Heart left ventricle (tissue), 16 donors: ENCODE measurements at regions of chr12 and their contacts with region 1.

Region 1: DNA sequence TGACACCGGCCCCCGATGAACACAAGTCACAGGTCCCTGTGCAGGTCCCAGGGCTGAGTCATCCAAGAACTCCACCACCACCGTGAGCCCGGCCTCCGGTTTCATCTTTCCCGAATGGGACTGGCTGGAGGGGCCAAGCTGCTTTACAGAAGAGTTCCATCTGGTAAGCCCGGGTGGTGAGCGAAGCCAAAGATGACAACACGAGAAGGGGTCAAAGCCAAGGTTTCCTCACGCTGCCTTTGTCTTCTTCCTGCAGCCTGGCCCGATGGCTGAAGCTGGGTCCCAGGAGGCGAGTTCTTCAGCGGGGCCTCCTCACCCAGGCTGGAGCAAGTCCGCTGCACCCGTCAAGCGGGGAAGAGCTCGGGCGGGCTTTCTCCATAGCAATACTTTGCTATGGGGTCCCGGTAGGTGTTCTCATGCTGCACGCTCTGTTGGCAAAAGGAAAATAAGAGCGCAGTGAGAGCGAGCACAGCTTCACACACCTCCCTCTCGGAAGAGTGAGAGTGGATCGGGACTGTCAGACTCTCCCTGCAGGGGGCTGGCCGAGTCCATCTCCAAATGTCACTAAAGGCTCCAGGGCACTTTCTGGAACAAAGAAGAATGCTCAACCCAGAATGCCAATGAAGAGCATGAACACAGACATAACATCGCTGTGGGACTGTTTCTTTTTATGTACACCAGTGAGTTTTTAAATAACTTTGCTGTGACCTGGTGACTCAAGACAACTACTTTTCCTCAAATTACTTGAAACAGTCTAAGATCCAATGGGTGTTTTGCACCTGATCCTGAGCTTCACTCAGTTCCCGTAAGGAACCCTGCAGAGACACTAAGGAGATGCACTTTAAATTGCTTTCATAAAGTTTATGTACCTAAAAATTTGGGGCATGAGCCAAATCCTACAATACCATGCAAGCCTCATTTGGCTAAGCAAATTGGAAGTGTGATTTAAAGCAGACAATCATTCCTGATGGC is 20.1 kb downstream of the SPRING1 start:
- DNase-seq: peak; percentile 61 to 85 (median 72)
- ATAC-seq: peak; percentile 44 to 83 (median 76)
- H3K4me3 ChIP-seq: peak overlapping the region in 4 of 12 donors; percentile 3 to 45 (median 27)
- H3K27ac ChIP-seq: peak overlapping the region in 3 of 12 donors; percentile 8 to 44 (median 21)
- H3K4me1 ChIP-seq: peaks cover 0 to 35% (median 18%) of the 10 kb centered on the region in 12 donors
- H3K27me3 ChIP-seq: no peaks in the 10 kb centered on the region
- CTCF ChIP-seq: no peak
- POLR2A ChIP-seq: no peak

Region 2: DNA sequence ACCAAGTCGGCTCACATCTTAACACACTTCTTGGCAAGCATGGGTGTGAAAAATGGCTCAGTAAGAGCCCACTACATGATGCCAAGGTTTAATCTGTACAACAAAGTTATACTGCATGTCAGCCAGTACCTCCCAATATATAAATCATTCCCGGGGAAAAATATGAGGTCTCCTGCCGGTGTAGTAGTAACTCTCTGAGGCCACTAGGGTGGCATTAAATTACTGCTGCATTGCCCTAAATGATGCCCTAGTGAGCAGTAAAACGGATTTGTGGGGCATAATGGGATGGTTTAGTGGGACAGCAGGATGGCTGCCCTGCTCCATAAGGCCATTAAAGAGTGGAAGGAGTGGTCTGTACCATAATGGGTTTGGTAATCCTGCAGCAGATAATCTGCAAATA is 707.9 kb before region 1 on chr12:
- intact Hi-C with region 1: loop called in 1 of 10 experiments (anchors 10 kb)
- DNase-seq: no peak
- ATAC-seq: no peak
- H3K4me3 ChIP-seq: no peak overlapping the region
- H3K27ac ChIP-seq: no peak overlapping the region
- H3K4me1 ChIP-seq: no peaks in the 10 kb centered on the region
- H3K27me3 ChIP-seq: no peaks in the 10 kb centered on the region
- CTCF ChIP-seq: peak in 6 of 12 donors; percentile 10 to 41 (median 18)
- POLR2A ChIP-seq: no peak

Region 3: GRCh38 chr12:117119592-117120198 is 401.9 kb after region 1 on chr12:
- intact Hi-C with region 1: loop called in 1 of 10 experiments (anchors 10 kb)
- DNase-seq: no peak
- ATAC-seq: peak; percentile 29 to 40 (median 38)
- H3K4me3 ChIP-seq: no peak overlapping the region
- H3K27ac ChIP-seq: peak overlapping the region in 9 of 12 donors; percentile 13 to 68 (median 33)
- H3K4me1 ChIP-seq: peaks cover 12 to 44% (median 24%) of the 10 kb centered on the region in 12 donors
- H3K27me3 ChIP-seq: no peaks in the 10 kb centered on the region
- CTCF ChIP-seq: peak; percentile 57 to 71 (median 63)
- POLR2A ChIP-seq: no peak